Mammary epithelial cell (primary cell): ENCODE measurements at regions of chr3 and their contacts with region 1.

Region 1: GRCh38 chr3:112002096-112002971 is 3.6 kb downstream of the TAGLN3 start:
- DNase-seq: peak; percentile 90
- H3K4me3 ChIP-seq: no peak overlapping the region
- H3K27ac ChIP-seq: peak overlapping the region; percentile 29
- H3K4me1 ChIP-seq: peaks cover 64% of the 10 kb centered on the region
- H3K27me3 ChIP-seq: no peaks in the 10 kb centered on the region
- CTCF ChIP-seq: no peak

Region 2: GRCh38 chr3:112013058-112013783 is 10.9 kb after region 1 on chr3:
- CTCF ChIA-PET with region 1: interaction called, 10 read pairs
- dilution Hi-C with region 1: no loop called
- in situ Hi-C with region 1: no loop called
- intact Hi-C with region 1: no loop called
- DNase-seq: peak; percentile 62
- H3K4me3 ChIP-seq: no peak overlapping the region
- H3K27ac ChIP-seq: no peak overlapping the region
- H3K4me1 ChIP-seq: no peaks in the 10 kb centered on the region
- H3K27me3 ChIP-seq: no peaks in the 10 kb centered on the region
- CTCF ChIP-seq: peak; percentile 83 to 86

Region 3: DNA sequence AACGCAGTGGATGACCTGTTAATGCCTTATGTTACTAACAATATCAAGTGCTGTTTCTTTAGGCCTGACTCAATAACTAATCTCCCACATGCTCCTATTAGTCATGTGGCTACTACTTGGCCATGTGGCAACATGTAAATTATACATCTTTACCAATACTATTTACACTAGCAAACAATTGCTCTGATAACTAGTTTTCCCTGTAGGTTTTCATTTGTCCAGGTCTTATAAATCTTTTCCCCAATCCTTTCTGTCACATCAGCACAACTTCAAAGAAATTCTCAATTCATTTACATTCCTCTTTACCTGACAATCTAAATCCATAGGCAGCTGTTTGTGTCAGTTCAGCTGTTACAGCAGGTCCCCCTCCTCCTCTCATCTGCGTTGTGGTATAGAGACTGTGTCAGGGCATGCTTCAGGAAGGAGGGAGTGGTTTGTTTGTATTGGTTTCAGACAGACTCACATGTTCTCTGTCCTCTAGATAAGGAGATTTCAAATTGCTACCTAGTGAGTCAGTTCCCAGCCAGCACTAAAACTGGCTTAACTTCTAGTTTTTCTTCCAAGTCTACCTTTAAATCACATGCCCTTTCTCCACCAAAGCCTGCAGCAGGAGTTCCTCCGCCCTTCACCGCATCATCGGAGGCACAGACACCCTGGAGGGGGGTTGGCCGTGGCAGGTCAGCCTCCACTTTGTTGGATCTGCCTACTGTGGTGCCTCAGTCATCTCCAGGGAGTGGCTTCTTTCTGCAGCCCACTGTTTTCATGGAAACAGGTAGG is 72.6 kb after region 1 on chr3:
- CTCF ChIA-PET with region 1: no interaction called
- dilution Hi-C with region 1: no loop called
- in situ Hi-C with region 1: no loop called
- intact Hi-C with region 1: loop called (anchors 2 kb)
- DNase-seq: peak; percentile 100
- H3K4me3 ChIP-seq: peak overlapping the region in 2 of 3 experiments; percentile 12 to 19
- H3K27ac ChIP-seq: peak overlapping the region; percentile 100
- H3K4me1 ChIP-seq: peaks cover 20% of the 10 kb centered on the region
- H3K27me3 ChIP-seq: no peaks in the 10 kb centered on the region
- CTCF ChIP-seq: no peak